ENCODE measurements at regions of chr2 and their contacts with region 1.

Region 1: GRCh38 chr2:137888845-137889244 is 75.4 kb upstream of the HNMT start:
- DNase-seq: peak; percentile 53
- H3K4me3 Mint-ChIP-seq: no peak overlapping the region
- H3K27ac Mint-ChIP-seq: no peak overlapping the region
- H3K4me1 Mint-ChIP-seq: peaks cover 10% of the 10 kb centered on the region
- H3K27me3 Mint-ChIP-seq: no peaks in the 10 kb centered on the region
- CTCF ChIP-seq: peak; percentile 55

Region 2: GRCh38 chr2:137467246-137467862 is 421.5 kb before region 1 on chr2:
- CTCF ChIA-PET with region 1: no interaction called
- POLR2A ChIA-PET with region 1: no interaction called
- intact Hi-C with region 1: no loop called
- DNase-seq: peak; percentile 73
- H3K4me3 Mint-ChIP-seq: no peak overlapping the region
- H3K27ac Mint-ChIP-seq: no peak overlapping the region
- H3K4me1 Mint-ChIP-seq: no peaks in the 10 kb centered on the region
- H3K27me3 Mint-ChIP-seq: no peaks in the 10 kb centered on the region
- CTCF ChIP-seq: peak; percentile 60

Region 3: GRCh38 chr2:137838255-137839092 is 50.4 kb before region 1 on chr2:
- CTCF ChIA-PET with region 1: no interaction called
- POLR2A ChIA-PET with region 1: no interaction called
- intact Hi-C with region 1: no loop called
- DNase-seq: peak; percentile 57
- H3K4me3 Mint-ChIP-seq: no peak overlapping the region
- H3K27ac Mint-ChIP-seq: no peak overlapping the region
- H3K4me1 Mint-ChIP-seq: no peaks in the 10 kb centered on the region
- H3K27me3 Mint-ChIP-seq: no peaks in the 10 kb centered on the region
- CTCF ChIP-seq: peak; percentile 57

Region 4: GRCh38 chr2:137865954-137866540 is 22.8 kb before region 1 on chr2:
- CTCF ChIA-PET with region 1: interaction called, 17 read pairs
- POLR2A ChIA-PET with region 1: no interaction called
- intact Hi-C with region 1: loop called (anchors 1 kb)
- DNase-seq: peak; percentile 66
- H3K4me3 Mint-ChIP-seq: no peak overlapping the region
- H3K27ac Mint-ChIP-seq: no peak overlapping the region
- H3K4me1 Mint-ChIP-seq: no peaks in the 10 kb centered on the region
- H3K27me3 Mint-ChIP-seq: peaks cover 21% of the 10 kb centered on the region
- CTCF ChIP-seq: peak; percentile 70

Region 5: DNA sequence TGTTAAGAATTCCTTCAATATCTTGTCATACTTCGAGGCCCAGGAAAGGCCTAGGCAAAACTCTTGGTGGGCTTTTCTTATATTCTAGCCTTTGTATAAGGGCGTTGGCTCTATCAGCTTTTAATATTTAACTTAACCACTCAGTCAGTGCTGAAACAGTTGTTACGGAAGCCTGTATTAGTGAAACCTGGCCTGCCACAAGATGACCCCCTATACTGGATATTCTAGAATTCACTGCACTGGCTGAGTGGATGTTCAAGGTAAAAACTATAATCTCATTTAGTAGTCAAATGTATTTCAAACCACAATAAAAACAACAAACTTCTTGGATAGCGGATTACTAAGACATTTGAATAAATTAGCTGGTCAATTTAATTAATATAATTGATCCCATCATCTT is 16.3 kb before region 1 on chr2:
- CTCF ChIA-PET with region 1: interaction called, 18 read pairs
- POLR2A ChIA-PET with region 1: no interaction called
- intact Hi-C with region 1: no loop called
- DNase-seq: no peak
- H3K4me3 Mint-ChIP-seq: no peak overlapping the region
- H3K27ac Mint-ChIP-seq: no peak overlapping the region
- H3K4me1 Mint-ChIP-seq: no peaks in the 10 kb centered on the region
- H3K27me3 Mint-ChIP-seq: no peaks in the 10 kb centered on the region
- CTCF ChIP-seq: no peak

Region 6: GRCh38 chr2:137928547-137929518 is 40.0 kb after region 1 on chr2:
- CTCF ChIA-PET with region 1: no interaction called
- POLR2A ChIA-PET with region 1: no interaction called
- intact Hi-C with region 1: no loop called
- DNase-seq: no peak
- H3K4me3 Mint-ChIP-seq: no peak overlapping the region
- H3K27ac Mint-ChIP-seq: no peak overlapping the region
- H3K4me1 Mint-ChIP-seq: no peaks in the 10 kb centered on the region
- H3K27me3 Mint-ChIP-seq: no peaks in the 10 kb centered on the region
- CTCF ChIP-seq: no peak

Region 7: GRCh38 chr2:138602166-138602460 is 713.3 kb after region 1 on chr2:
- CTCF ChIA-PET with region 1: no interaction called
- POLR2A ChIA-PET with region 1: no interaction called
- intact Hi-C with region 1: no loop called
- DNase-seq: no peak
- H3K4me3 Mint-ChIP-seq: no peak overlapping the region
- H3K27ac Mint-ChIP-seq: no peak overlapping the region
- H3K4me1 Mint-ChIP-seq: no peaks in the 10 kb centered on the region
- H3K27me3 Mint-ChIP-seq: no peaks in the 10 kb centered on the region
- CTCF ChIP-seq: no peak